Right cardiac atrium (tissue), 5 donors: ENCODE measurements at regions of chr17 and their contacts with region 1.

Region 1: GRCh38 chr17:45148183-45149036 is at the start of gene HEXIM1:
- DNase-seq: peak; percentile 99 to 100 (median 100)
- ATAC-seq: peak; percentile 83 to 85
- H3K4me3 ChIP-seq: peak within 1 kb of the TSS; percentile 85
- H3K27ac ChIP-seq: peak within 1 kb of the TSS; percentile 99
- H3K4me1 ChIP-seq: peaks cover 9% of the 10 kb centered on the region
- H3K27me3 ChIP-seq: no peaks in the 10 kb centered on the region
- total RNA-seq, gene HEXIM1: 37.1 to 42.6 (median 40.6) TPM

Region 2: GRCh38 chr17:44733753-44734152 is 414.7 kb before region 1 on chr17:
- intact Hi-C with region 1: no loop called
- DNase-seq: no peak
- ATAC-seq: peak; percentile 40 to 71
- H3K4me3 ChIP-seq: no peak overlapping the region
- H3K27ac ChIP-seq: no peak overlapping the region
- H3K4me1 ChIP-seq: no peaks in the 10 kb centered on the region
- H3K27me3 ChIP-seq: no peaks in the 10 kb centered on the region

Region 3: DNA sequence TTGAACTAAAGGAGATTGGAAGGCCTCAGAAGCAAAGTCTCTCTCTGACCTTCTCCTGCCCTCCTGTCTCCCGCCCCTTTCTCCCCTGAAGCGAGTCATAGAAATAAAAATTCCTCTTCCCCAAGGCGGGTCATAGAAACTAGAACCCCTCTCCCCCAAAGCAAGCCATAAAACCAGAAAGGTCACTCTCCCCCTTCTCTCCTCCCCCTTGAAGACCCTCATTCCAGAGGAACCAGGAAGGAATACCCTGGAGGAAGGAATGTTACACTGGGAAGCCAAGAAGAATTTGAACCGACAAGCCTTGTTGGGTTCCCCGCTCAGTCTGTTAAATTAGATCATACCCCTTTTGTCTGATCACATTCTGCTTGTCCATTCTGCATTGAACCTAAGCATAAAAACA is 315.6 kb before region 1 on chr17:
- intact Hi-C with region 1: no loop called
- DNase-seq: no peak
- ATAC-seq: no peak
- H3K4me3 ChIP-seq: no peak overlapping the region
- H3K27ac ChIP-seq: no peak overlapping the region
- H3K4me1 ChIP-seq: no peaks in the 10 kb centered on the region
- H3K27me3 ChIP-seq: no peaks in the 10 kb centered on the region

Region 4: GRCh38 chr17:45135192-45135977 is 13.0 kb before region 1 on chr17 and contains the start of gene ACBD4:
- intact Hi-C with region 1: loop called in 1 of 4 experiments (anchors 2 kb)
- DNase-seq: peak; percentile 95 to 98 (median 97)
- ATAC-seq: peak; percentile 83 to 84
- H3K4me3 ChIP-seq: peak within 1 kb of the TSS; percentile 49
- H3K27ac ChIP-seq: peak within 1 kb of the TSS; percentile 54
- H3K4me1 ChIP-seq: no peaks in the 10 kb centered on the region
- H3K27me3 ChIP-seq: no peaks in the 10 kb centered on the region
- total RNA-seq, gene ACBD4: 11.9 to 14.8 (median 12.6) TPM

Region 5: DNA sequence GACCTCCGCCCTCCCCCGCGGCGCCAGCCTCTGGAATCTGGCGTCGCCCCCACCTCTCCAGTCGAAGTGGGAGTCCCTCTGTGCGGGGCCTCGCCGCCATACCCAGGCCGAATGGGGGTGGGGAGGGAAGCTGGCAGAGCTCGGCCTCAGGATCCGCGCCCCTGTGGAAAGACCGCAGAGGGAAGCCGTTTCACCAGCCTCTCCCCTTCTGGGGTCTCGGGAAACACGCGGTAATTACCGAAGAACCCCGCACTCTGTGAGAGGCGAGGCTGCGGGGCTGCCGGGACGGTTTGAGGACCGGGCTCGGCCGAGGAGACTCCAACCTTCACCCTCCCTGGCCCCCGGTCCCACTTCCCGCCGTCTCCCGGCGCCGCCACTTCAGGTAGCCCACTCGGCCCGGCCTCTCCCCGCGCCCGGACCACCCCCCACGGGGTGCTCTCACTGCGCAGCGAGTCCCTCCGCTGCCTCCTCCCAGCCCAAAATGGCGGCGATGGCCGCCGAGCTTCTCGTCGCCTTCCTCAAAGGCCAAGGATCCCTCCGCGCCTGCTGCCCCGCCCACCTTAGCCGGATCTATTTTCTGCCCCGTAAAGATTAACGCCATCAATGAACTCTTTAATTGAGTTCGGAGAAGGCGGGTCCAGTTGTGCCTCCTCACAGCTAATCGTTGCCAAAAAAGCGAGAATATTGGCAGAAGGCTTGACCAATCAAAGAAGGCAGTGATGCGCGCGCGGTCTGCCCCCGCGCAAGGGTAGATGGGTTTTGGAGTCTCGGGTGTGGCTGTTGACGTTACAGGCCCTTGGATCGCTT is 12.8 kb after region 1 on chr17:
- intact Hi-C with region 1: loop called in 1 of 4 experiments (anchors 2 kb)
- DNase-seq: peak; percentile 97 to 99 (median 99)
- ATAC-seq: peak; percentile 97
- H3K4me3 ChIP-seq: peak overlapping the region; percentile 93
- H3K27ac ChIP-seq: peak overlapping the region; percentile 100
- H3K4me1 ChIP-seq: peaks cover 6% of the 10 kb centered on the region
- H3K27me3 ChIP-seq: no peaks in the 10 kb centered on the region

Region 6: DNA sequence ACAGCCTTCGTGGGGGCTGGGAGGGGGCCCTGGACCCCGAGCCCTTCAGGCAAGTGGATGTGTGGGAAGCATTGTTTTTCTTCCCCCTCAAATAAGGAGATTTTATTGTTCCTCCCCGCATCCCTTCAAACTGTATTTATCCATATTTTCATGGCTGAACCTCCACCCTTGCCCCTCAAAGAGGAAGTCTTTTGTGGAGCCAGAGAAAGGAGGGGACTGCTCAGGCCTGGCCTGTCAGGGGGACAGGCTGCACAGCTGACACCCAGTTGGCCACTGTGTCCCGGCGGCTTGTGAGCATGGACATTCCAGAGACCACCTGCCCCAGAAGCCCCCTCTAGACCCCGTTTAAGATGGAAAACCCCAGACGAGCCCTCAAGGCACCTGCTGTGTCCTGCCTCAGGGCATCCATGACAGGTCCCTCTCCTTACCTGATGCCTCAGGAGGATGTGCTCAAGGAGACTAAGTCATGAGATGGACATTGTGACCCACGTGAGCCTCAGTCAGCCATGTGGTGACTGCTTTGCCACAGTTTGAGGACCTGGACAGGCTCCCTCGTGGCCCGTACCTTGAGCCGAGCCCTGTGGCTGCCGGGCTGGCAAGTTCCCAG is 29.3 kb after region 1 on chr17:
- intact Hi-C with region 1: no loop called
- DNase-seq: peak in 1 of 3 donors; percentile 22
- ATAC-seq: no peak
- H3K4me3 ChIP-seq: no peak overlapping the region
- H3K27ac ChIP-seq: no peak overlapping the region
- H3K4me1 ChIP-seq: no peaks in the 10 kb centered on the region
- H3K27me3 ChIP-seq: no peaks in the 10 kb centered on the region

Region 7: GRCh38 chr17:45197555-45198334 is 49.3 kb after region 1 on chr17:
- intact Hi-C with region 1: loop called in 1 of 4 experiments (anchors 5 kb)
- DNase-seq: peak; percentile 93 to 97 (median 96)
- ATAC-seq: peak; percentile 97
- H3K4me3 ChIP-seq: no peak overlapping the region
- H3K27ac ChIP-seq: no peak overlapping the region
- H3K4me1 ChIP-seq: peaks cover 3% of the 10 kb centered on the region
- H3K27me3 ChIP-seq: no peaks in the 10 kb centered on the region

Region 8: DNA sequence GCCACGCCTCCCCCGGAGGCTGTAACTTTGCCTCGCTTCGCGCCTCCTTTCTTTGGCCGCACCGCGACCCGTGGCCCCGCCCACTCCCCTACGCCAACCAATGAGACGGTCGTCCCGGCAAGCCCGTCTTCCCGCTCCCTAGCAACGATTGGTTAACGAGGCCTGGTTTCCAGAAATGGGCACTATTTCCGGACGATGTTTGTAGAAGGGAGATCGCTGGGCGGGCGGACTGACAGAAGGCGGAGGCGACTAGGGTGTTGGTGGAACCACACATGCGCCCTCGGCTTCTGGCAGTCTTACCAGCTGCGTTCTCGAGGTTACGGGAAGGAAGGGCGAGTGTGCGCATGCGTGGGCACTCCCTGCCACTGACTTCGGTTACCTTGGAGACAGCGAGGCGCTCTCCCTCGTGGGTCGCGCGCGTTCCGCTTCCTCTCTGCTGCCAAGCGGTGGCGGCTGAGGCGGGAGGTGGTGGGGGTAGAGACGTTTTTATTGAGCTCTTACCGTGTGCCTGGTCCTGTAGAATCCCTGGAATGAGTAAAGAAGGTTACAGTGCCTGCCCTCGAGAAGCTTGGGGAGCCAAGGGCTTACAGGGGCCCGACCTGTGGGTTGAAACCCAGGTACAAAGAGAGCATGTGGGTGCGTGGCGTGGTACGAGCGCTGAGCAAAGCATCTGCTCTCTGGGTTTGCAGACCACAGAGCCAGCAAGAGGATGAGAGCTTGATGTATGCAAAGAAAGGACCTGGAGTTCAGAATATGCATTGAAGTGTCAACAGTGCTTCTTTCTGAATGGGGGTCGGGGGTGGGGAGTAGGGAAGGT is 168.9 kb after region 1 on chr17:
- intact Hi-C with region 1: loop called in 1 of 4 experiments (anchors 10 kb)
- DNase-seq: peak; percentile 100
- ATAC-seq: peak; percentile 94 to 95
- H3K4me3 ChIP-seq: peak overlapping the region; percentile 21
- H3K27ac ChIP-seq: peak overlapping the region; percentile 25
- H3K4me1 ChIP-seq: peaks cover 15% of the 10 kb centered on the region
- H3K27me3 ChIP-seq: no peaks in the 10 kb centered on the region